ENCODE measurements at regions of chr3 and their contacts with region 1.

Region 1: DNA sequence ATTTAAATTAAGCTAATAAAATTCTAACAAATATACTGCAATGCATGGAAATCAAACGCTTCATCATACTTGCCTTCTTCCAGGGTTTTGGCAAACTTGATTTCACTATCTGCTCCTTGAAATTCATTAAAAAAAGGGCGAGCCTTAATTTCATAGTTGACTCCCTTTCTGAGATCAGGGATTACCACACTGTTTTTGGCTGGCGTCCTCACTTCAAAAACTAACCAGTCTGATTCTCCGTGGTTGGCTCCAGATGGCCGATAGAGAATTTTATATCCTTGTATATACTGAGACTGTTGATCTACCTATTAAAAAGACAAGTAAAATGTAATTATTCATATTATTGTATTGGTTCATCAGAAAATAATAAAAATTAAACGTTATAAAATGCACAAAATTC is 1106.8 kb downstream of the ROBO1 start:
- DNase-seq: no peak
- ATAC-seq: no peak
- H3K4me3 ChIP-seq: no peak overlapping the region
- H3K27ac ChIP-seq: no peak overlapping the region
- H3K4me1 ChIP-seq: no peaks in the 10 kb centered on the region
- H3K27me3 ChIP-seq: no peaks in the 10 kb centered on the region
- CTCF ChIP-seq: no peak

Region 2: GRCh38 chr3:78314327-78314726 is 346.6 kb before region 1 on chr3:
- intact Hi-C with region 1: no loop called
- DNase-seq: no peak
- ATAC-seq: no peak
- H3K4me3 ChIP-seq: no peak overlapping the region
- H3K27ac ChIP-seq: no peak overlapping the region
- H3K4me1 ChIP-seq: no peaks in the 10 kb centered on the region
- H3K27me3 ChIP-seq: no peaks in the 10 kb centered on the region
- CTCF ChIP-seq: no peak

Region 3: GRCh38 chr3:78887547-78888011 is 226.6 kb after region 1 on chr3:
- intact Hi-C with region 1: no loop called
- DNase-seq: no peak
- ATAC-seq: no peak
- H3K4me3 ChIP-seq: no peak overlapping the region
- H3K27ac ChIP-seq: no peak overlapping the region
- H3K4me1 ChIP-seq: no peaks in the 10 kb centered on the region
- H3K27me3 ChIP-seq: no peaks in the 10 kb centered on the region
- CTCF ChIP-seq: no peak

Region 4: GRCh38 chr3:79032686-79033318 is 371.8 kb after region 1 on chr3:
- intact Hi-C with region 1: loop called (anchors 5 kb)
- DNase-seq: no peak
- ATAC-seq: peak in 1 of 2 donors; percentile 58
- H3K4me3 ChIP-seq: no peak overlapping the region
- H3K27ac ChIP-seq: no peak overlapping the region
- H3K4me1 ChIP-seq: no peaks in the 10 kb centered on the region
- H3K27me3 ChIP-seq: no peaks in the 10 kb centered on the region
- CTCF ChIP-seq: peak; percentile 46

Region 5: DNA sequence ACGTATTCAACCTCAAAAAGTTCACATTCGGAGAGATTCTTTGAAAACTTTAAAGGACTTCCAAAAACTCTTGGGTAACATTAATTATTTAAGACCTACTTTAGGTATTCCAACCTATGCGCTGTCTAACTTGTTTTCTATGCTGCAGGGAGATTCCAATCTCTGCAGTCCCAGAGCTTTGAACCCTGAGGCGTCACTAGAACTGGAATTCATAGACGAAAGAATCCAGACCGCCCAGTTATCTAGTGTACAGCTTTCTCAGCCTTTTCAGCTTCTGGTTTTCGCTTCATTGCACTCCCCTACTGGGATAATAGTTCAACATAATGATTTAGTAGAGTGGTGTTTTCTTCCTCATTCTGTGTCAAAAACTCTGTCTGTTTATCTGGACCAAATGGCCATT is 395.5 kb after region 1 on chr3:
- intact Hi-C with region 1: no loop called
- DNase-seq: no peak
- ATAC-seq: no peak
- H3K4me3 ChIP-seq: no peak overlapping the region
- H3K27ac ChIP-seq: no peak overlapping the region
- H3K4me1 ChIP-seq: no peaks in the 10 kb centered on the region
- H3K27me3 ChIP-seq: no peaks in the 10 kb centered on the region
- CTCF ChIP-seq: no peak

Measured in lower lobe of right lung (tissue), 2 donors.